ENCODE measurements at regions of chr13 and their contacts with region 1.

Region 1: DNA sequence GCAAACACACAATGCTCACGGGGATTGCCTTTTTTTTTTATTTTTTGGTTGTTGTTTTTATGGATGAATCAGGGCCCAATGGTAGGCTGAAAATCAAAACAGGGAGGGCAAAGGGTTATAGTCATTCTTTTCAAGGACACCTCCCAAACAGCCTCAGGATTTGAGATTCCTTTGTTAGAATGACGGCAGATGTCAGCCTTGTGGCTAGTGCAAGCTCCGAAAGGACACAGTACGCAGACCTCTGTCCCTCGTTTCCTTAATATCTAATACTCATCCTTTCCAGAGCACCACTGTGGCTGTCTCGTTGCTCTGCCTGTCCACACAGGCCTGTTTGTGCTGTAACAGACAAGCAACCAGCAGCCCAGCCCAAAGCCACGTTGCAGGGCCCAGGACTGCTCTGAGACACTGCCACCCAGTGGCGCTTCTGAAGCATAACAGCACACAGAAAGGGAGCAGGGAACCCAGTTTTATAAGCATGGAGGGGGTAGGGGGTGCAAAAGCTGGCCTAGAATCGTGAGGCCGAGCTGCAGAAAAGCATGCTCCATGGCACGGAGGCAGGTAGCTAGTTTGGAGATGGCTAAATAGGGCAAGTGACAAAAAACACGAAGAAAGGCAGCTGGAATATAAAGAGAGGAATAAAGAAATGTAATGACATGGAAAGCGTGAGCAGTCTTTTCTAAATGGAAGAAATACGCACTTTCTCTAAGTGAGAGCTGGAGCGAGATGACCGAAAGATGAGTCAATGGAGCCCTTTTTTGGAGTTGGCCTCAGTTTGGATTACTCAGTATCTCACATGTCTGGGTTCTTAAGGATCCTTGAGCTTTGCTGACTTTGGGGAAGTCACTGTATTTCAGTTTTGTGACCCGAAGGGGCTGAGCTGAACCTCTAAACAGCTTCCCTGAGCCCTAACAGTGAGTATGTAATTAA is 40.7 kb upstream of the MEDAG start:
- DNase-seq: peak; percentile 92
- H3K4me3 ChIP-seq: no peak overlapping the region
- H3K27ac ChIP-seq: peak overlapping the region; percentile 95
- H3K4me1 ChIP-seq: peaks cover 29% of the 10 kb centered on the region
- H3K27me3 ChIP-seq: no peaks in the 10 kb centered on the region
- CTCF ChIP-seq: peak; percentile 91 to 96
- POLR2A ChIP-seq: no peak

Region 2: GRCh38 chr13:30364876-30365275 is 500.5 kb before region 1 on chr13:
- CTCF ChIA-PET with region 1: no interaction called
- POLR2A ChIA-PET with region 1: no interaction called
- dilution Hi-C with region 1: no loop called
- intact Hi-C with region 1: loop called (anchors 1 kb)
- DNase-seq: peak; percentile 95
- H3K4me3 ChIP-seq: peak overlapping the region in 1 of 3 experiments; percentile 29
- H3K27ac ChIP-seq: peak overlapping the region; percentile 95
- H3K4me1 ChIP-seq: peaks cover 30% of the 10 kb centered on the region
- H3K27me3 ChIP-seq: no peaks in the 10 kb centered on the region
- CTCF ChIP-seq: no peak
- POLR2A ChIP-seq: peak; percentile 61

Region 3: GRCh38 chr13:30617315-30618185 is 247.8 kb before region 1 on chr13 and contains the start of gene USPL1:
- CTCF ChIA-PET with region 1: interaction called, 4 read pairs
- POLR2A ChIA-PET with region 1: no interaction called
- dilution Hi-C with region 1: no loop called
- intact Hi-C with region 1: loop called (anchors 1 kb)
- DNase-seq: peak; percentile 100
- H3K4me3 ChIP-seq: peak within 1 kb of the TSS; percentile 83 to 95 (median 95)
- H3K27ac ChIP-seq: peak within 1 kb of the TSS; percentile 87
- H3K4me1 ChIP-seq: peaks cover 36% of the 10 kb centered on the region
- H3K27me3 ChIP-seq: no peaks in the 10 kb centered on the region
- CTCF ChIP-seq: peak in 1 of 2 donors; percentile 31
- POLR2A ChIP-seq: no peak
- total RNA-seq, gene USPL1: 18.8 and 21.0 TPM in 2 replicates

Region 4: DNA sequence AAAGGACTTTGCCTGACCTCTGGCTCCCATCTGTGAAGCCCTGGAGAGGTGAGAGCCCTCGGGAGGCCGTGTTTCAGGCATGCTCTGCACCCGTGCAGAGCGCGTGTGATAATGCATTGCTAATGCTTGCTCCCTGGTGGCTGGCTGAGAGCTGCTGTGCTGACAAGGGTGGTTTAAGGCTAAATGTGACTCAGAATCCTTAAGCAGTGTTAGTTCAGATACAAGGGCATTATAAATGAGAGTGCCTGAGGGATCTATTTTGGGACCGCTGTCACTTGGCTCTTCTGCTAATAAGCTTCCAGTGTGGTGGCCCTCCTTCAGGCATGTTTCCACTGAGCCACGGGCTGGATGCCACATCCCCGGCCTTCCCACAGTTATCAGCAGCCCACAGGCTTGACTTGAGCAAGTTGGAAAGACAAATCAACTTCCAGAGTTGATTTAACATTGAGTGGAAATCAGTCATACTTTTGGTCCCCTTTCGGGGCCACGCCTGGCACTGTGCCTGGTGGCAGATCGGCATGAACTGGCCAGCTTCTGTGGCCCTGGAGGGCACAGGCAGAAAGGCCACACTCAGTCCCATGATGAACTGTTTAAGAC is 113.1 kb before region 1 on chr13:
- CTCF ChIA-PET with region 1: no interaction called
- POLR2A ChIA-PET with region 1: no interaction called
- dilution Hi-C with region 1: no loop called
- intact Hi-C with region 1: no loop called
- DNase-seq: no peak
- H3K4me3 ChIP-seq: no peak overlapping the region
- H3K27ac ChIP-seq: no peak overlapping the region
- H3K4me1 ChIP-seq: no peaks in the 10 kb centered on the region
- H3K27me3 ChIP-seq: peaks cover 0 to 2% of the 10 kb centered on the region in 2 experiments
- CTCF ChIP-seq: no peak
- POLR2A ChIP-seq: no peak

Region 5: DNA sequence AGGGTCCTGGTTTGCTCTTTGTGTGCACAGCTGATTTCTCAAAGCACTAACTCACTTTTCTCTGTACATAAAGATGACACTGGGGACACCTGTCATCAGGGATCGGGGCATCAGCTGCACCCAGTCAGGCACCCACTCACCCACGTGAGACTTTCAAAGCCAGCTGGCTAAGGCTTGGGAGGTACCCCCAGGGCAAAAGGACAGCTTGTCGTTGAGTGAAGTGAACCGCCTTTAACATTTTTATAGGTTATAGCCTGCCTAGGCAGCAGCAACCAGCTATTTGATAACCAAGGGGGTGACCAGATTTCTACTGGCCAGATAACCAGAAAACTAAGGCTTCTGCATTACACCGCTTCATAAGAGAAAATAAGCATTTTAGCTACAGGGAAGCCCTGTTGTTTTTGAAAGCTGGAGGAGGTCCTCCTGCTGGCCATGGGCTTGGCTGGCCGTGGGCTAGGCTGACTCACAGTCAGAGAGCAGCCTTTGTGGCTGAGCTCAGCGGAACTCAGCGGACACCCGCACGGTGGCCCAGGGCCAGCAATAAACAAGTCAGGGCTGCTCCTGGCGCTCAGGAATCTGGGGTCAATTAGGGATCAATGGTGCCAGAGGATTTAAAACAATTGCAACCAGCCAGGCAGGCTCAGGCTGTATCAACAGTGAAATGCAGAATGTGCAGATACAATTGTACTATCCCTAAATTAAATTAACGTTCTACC is 72.9 kb before region 1 on chr13:
- CTCF ChIA-PET with region 1: interaction called, 14 read pairs
- POLR2A ChIA-PET with region 1: no interaction called
- dilution Hi-C with region 1: no loop called
- intact Hi-C with region 1: no loop called
- DNase-seq: peak; percentile 96
- H3K4me3 ChIP-seq: no peak overlapping the region
- H3K27ac ChIP-seq: peak overlapping the region; percentile 73
- H3K4me1 ChIP-seq: peaks cover 31% of the 10 kb centered on the region
- H3K27me3 ChIP-seq: no peaks in the 10 kb centered on the region
- CTCF ChIP-seq: peak; percentile 47 to 63
- POLR2A ChIP-seq: no peak

Region 6: DNA sequence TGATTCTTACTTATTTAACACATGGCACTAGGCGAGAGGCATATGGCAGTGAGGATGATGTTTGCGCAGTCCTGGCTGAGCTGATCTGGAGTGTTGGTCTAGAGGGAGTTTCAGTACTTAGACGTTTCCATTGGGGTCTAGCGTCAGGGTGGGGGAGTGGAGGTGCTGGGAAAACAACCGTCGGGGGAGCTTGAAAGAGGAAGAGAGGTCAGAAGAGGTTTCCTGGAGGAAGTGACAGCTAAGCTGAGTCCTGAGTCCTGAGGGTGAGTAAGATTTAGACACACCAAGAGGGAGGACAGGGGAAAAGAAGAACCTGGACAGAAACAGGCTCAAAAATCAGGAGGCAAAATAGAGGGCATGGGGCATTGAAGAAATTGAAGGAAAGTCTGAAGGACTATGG is 48.6 kb before region 1 on chr13:
- CTCF ChIA-PET with region 1: interaction called, 16 read pairs
- POLR2A ChIA-PET with region 1: interaction called, 6 read pairs
- dilution Hi-C with region 1: no loop called
- intact Hi-C with region 1: loop called (anchors 1 kb)
- DNase-seq: peak; percentile 81
- H3K4me3 ChIP-seq: no peak overlapping the region
- H3K27ac ChIP-seq: peak overlapping the region; percentile 87
- H3K4me1 ChIP-seq: peaks cover 25% of the 10 kb centered on the region
- H3K27me3 ChIP-seq: no peaks in the 10 kb centered on the region
- CTCF ChIP-seq: no peak
- POLR2A ChIP-seq: no peak

Region 7: GRCh38 chr13:30905932-30906383 is 40.6 kb after region 1 on chr13 and contains the start of gene MEDAG:
- CTCF ChIA-PET with region 1: interaction called, 13 read pairs
- POLR2A ChIA-PET with region 1: interaction called, 4 read pairs
- dilution Hi-C with region 1: no loop called
- intact Hi-C with region 1: loop called (anchors 1 kb)
- DNase-seq: peak; percentile 85
- H3K4me3 ChIP-seq: peak within 1 kb of the TSS; percentile 7 to 43 (median 38)
- H3K27ac ChIP-seq: peak within 1 kb of the TSS; percentile 79
- H3K4me1 ChIP-seq: peaks cover 32% of the 10 kb centered on the region
- H3K27me3 ChIP-seq: no peaks in the 10 kb centered on the region
- CTCF ChIP-seq: no peak
- POLR2A ChIP-seq: peak; percentile 67
- total RNA-seq, gene MEDAG: 27.2 and 30.2 TPM in 2 replicates

Region 8: GRCh38 chr13:31161828-31162590 is 296.6 kb after region 1 on chr13 and contains the start of gene HSPH1:
- CTCF ChIA-PET with region 1: no interaction called
- POLR2A ChIA-PET with region 1: no interaction called
- dilution Hi-C with region 1: no loop called
- intact Hi-C with region 1: loop called (anchors 1 kb)
- DNase-seq: peak; percentile 98
- H3K4me3 ChIP-seq: peak within 1 kb of the TSS; percentile 88 to 99 (median 97)
- H3K27ac ChIP-seq: peak within 1 kb of the TSS; percentile 95
- H3K4me1 ChIP-seq: peaks cover 24% of the 10 kb centered on the region
- H3K27me3 ChIP-seq: no peaks in the 10 kb centered on the region
- CTCF ChIP-seq: peak in 1 of 2 donors; percentile 31
- POLR2A ChIP-seq: peak; percentile 81
- total RNA-seq, gene HSPH1: 98.1 and 124 TPM in 2 replicates

Measured in endothelial cell of umbilical vein (primary cell).